ENCODE measurements at regions of chr16 and their contacts with region 1.

Region 1: GRCh38 chr16:788394-789126 is at the start of gene CHTF18:
- DNase-seq: peak; percentile 93 to 95
- ATAC-seq: peak; percentile 93 to 97 (median 96)
- H3K4me3 ChIP-seq: peak within 1 kb of the TSS; percentile 81
- H3K27ac ChIP-seq: peak within 1 kb of the TSS; percentile 48
- H3K4me1 ChIP-seq: peaks cover 14% of the 10 kb centered on the region
- H3K27me3 ChIP-seq: peaks cover 0 to 6% (median 0%) of the 10 kb centered on the region in 3 donors
- CTCF ChIP-seq: no peak
- total RNA-seq, gene CHTF18: 2.5 to 4.5 (median 4.0) TPM

Region 2: DNA sequence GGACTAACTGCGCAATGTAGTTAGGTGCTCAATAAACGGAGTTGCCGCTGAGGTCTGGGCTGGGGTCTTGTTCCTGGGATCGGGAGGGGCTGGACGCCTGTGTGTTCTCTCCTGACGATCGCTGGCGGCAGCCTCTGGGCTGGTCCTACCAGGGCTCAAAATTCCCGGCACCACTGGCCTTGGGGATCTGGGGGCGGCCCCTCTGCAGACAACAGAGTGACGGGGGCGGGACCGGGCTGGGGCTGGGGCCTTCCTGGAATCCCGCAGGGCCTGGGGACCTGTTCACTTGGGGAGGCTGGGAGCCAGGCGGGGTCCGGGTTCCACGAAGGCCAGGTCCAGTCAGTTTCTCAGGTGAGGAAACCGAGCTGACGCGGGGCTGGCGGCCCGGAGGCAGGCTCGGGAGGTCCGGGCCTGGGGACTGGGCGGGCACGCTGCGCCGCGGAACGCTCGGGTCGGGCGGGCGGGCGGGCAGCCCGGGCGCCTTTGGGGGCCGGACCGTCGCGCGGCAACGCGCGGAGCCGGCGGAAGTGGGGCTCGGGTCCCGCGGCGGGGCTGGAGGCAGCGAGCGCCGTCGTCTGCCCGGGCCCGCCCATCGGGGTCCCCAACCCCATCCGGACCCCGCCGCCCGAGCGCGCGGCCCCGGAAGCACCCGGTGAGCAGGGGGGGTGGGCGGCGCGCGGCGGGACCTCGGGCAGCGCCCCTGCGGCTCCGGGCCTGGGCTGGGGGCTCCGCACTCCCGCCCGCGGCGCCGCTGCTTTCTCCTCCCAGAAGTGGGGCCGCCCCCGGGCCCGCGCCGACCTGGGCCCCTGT is 218.9 kb before region 1 on chr16 and contains the start of gene PIGQ:
- intact Hi-C with region 1: loop called in 1 of 2 experiments (anchors 10 kb)
- DNase-seq: peak; percentile 77 to 81
- ATAC-seq: peak; percentile 66 to 80 (median 74)
- H3K4me3 ChIP-seq: peak within 1 kb of the TSS; percentile 84
- H3K27ac ChIP-seq: peak within 1 kb of the TSS; percentile 80
- H3K4me1 ChIP-seq: peaks cover 16% of the 10 kb centered on the region
- H3K27me3 ChIP-seq: no peaks in the 10 kb centered on the region
- CTCF ChIP-seq: no peak
- total RNA-seq, gene PIGQ: 18.3 to 26.3 (median 22.0) TPM

Region 3: GRCh38 chr16:714558-715476 is 73.7 kb before region 1 on chr16 and contains the start of gene METRN:
- intact Hi-C with region 1: loop called (anchors 2 to 5 kb)
- DNase-seq: peak; percentile 95 to 96
- ATAC-seq: peak; percentile 90 to 91 (median 90)
- H3K4me3 ChIP-seq: peak within 1 kb of the TSS; percentile 74
- H3K27ac ChIP-seq: no peak within 1 kb of the TSS
- H3K4me1 ChIP-seq: peaks cover 12% of the 10 kb centered on the region
- H3K27me3 ChIP-seq: peaks cover 0 to 18% (median 9%) of the 10 kb centered on the region in 3 donors
- CTCF ChIP-seq: no peak
- total RNA-seq, gene METRN: 19.6 to 25.8 (median 22.8) TPM